Gastrocnemius medialis (tissue), 4 donors: ENCODE measurements at regions of chr6 and their contacts with region 1.

Region 1: DNA sequence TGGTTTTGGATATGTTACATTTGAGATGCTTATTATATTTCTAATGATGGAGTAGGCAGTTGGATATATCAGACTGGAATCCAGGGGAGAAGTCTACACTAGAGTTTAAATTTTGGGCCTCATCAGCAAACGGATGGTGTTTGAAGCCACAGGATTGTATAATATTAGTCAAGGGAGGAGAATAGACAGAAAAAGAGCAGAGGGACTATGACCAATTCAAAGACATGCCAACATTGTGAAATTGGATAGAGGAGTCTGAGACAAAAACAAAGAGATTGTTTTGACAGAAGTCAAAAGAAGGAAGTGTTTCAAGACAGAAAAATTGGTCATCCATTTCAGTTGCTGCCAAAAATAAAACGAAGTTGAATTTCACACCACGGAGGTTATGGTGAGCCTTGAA is 66.5 kb downstream of the NOX3 start:
- DNase-seq: no peak
- ATAC-seq: no peak
- H3K4me3 ChIP-seq: no peak overlapping the region
- H3K27ac ChIP-seq: no peak overlapping the region
- H3K4me1 ChIP-seq: no peaks in the 10 kb centered on the region
- H3K27me3 ChIP-seq: no peaks in the 10 kb centered on the region
- CTCF ChIP-seq: no peak
- POLR2A ChIP-seq: no peak

Region 2: DNA sequence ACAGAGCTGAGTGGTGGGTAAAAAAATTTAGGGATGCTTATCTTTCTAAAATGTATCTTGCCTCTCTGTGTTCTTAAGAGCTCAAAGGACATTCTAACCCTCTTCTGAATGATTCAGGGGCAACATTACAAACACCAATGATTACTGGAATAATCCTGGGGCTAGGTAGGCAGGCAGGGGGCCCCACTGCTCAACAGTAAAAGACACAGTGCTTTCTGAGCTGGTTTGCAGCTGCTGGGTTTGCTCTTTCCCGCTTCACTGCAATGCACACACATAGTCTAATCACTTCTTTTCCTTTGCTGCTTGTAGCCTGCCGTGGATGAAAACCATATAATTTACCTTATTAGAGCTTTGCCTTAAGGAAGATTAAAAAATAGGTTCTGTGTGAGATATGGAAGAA is 101.4 kb before region 1 on chr6:
- in situ Hi-C with region 1: no loop called
- intact Hi-C with region 1: no loop called
- DNase-seq: no peak
- ATAC-seq: no peak
- H3K4me3 ChIP-seq: no peak overlapping the region
- H3K27ac ChIP-seq: no peak overlapping the region
- H3K4me1 ChIP-seq: peaks cover 1 to 6% of the 10 kb centered on the region in 2 donors
- H3K27me3 ChIP-seq: no peaks in the 10 kb centered on the region
- CTCF ChIP-seq: no peak
- POLR2A ChIP-seq: no peak

Region 3: GRCh38 chr6:155426408-155426945 is 37.3 kb after region 1 on chr6:
- in situ Hi-C with region 1: no loop called
- intact Hi-C with region 1: loop called (anchors 1 kb)
- DNase-seq: no peak
- ATAC-seq: no peak
- H3K4me3 ChIP-seq: no peak overlapping the region
- H3K27ac ChIP-seq: no peak overlapping the region
- H3K4me1 ChIP-seq: no peaks in the 10 kb centered on the region
- H3K27me3 ChIP-seq: no peaks in the 10 kb centered on the region
- CTCF ChIP-seq: no peak
- POLR2A ChIP-seq: no peak